GM13977 (cell line): ENCODE measurements at regions of chr17 and their contacts with region 1.

Region 1: DNA sequence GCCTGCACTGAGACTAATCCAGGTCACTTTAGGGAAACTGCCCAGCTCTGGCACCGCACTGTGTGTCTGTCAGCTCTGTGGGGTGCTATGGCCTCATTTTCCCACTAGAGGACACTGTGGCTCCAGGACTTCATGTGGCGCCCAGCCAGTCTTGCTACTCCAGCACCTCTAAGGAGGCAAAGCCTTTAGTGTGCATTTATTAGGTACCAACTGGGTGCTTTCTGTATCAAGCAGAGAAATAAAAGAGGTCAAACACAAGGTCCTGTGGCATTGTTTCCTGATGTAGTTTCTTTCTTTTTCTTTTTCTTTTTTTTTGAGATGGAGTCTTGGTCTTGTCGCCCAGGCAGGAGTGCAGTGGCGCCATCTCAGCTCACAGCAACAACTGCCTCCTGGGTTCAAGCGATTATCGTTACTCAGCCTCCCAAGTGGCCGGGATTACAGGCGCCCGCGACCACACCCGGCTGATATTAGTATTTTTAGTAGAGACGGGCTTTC is 12.5 kb upstream of the RHBDL3 start:
- DNase-seq: peak; percentile 84
- CTCF ChIP-seq: peak; percentile 99

Region 2: DNA sequence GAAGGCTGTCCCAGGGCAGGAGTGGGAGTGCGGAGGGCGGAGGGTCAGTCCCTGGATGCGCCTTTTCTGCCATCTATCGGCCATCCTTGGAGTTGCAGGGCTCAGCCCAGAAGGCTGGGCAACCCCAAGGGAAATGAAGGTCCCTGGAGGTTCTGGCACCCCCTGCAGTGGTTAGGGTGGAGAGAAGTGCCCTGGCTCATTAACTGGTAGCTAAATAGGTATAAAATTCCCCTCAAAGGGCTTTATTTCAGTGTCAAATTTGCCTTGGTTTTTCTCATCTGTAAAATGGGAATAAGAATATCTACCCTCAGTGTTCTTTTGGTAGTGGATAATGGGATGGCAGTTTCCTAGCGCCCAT is 66.4 kb after region 1 on chr17:
- in situ Hi-C with region 1: loop called (anchors 10 kb)
- DNase-seq: peak; percentile 86
- CTCF ChIP-seq: peak; percentile 97